ENCODE measurements at regions of chr15 and their contacts with region 1.

Region 1: GRCh38 chr15:85412956-85413854 is 32.8 kb downstream of the AKAP13 start:
- DNase-seq: peak; percentile 57 to 84
- ATAC-seq: peak; percentile 94 to 98 (median 98)
- H3K4me3 ChIP-seq: no peak overlapping the region
- H3K4me3 Mint-ChIP-seq: peak overlapping the region; percentile 22
- H3K27ac ChIP-seq: peak overlapping the region; percentile 73
- H3K27ac Mint-ChIP-seq: peak overlapping the region; percentile 76 to 95
- H3K4me1 ChIP-seq: peaks cover 11% of the 10 kb centered on the region
- H3K4me1 Mint-ChIP-seq: peaks cover 32 to 35% of the 10 kb centered on the region in 2 donors
- H3K27me3 ChIP-seq: no peaks in the 10 kb centered on the region
- H3K27me3 Mint-ChIP-seq: no peaks in the 10 kb centered on the region
- CTCF ChIP-seq: no peak

Region 2: DNA sequence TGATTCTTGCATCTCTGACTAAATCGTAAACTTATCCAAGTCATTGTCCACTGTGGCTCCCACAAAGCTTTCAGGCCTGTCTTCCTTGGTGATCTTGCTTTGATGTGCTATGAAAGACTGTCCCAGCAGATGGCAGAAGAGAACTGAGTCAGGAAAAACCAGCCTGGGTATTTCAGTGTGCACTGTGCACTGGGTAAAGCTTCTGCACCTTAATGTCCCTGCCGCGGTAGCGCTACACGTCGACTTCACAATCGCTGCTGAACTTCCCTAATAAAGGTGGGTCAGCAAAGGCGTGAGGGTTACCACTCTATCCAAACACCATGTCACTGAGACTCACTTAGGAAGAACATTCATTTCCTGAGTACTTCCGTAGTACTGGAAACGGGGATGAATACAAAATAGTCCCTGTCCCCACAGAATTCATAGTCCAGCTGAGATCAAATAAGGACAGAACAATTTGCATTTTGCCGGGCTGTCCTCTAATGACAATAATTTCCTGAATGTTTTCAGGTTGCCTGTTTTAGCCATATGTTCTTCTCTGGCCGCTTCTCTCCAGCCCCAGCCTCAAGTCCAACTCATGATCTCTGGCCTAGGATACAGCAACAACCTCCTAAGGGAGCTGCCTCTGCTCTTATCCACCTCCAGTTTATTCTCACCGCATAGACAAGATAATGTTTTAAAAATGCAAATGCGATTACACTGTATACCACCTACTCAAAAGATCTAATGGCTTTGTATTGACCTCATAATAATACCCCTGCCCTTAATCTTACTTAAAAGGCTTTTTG is 116.4 kb before region 1 on chr15:
- intact Hi-C with region 1: loop called (anchors 1 kb)
- DNase-seq: peak; percentile 33 to 87
- ATAC-seq: peak; percentile 87 to 99 (median 99)
- H3K4me3 ChIP-seq: no peak overlapping the region
- H3K4me3 Mint-ChIP-seq: peak overlapping the region; percentile 6
- H3K27ac ChIP-seq: no peak overlapping the region
- H3K27ac Mint-ChIP-seq: peak overlapping the region in 1 of 2 donors; percentile 49
- H3K4me1 ChIP-seq: peaks cover 3% of the 10 kb centered on the region
- H3K4me1 Mint-ChIP-seq: peaks cover 10 to 15% of the 10 kb centered on the region in 2 donors
- H3K27me3 ChIP-seq: no peaks in the 10 kb centered on the region
- H3K27me3 Mint-ChIP-seq: peaks cover 9% of the 10 kb centered on the region in 2 donors
- CTCF ChIP-seq: peak; percentile 69

Region 3: DNA sequence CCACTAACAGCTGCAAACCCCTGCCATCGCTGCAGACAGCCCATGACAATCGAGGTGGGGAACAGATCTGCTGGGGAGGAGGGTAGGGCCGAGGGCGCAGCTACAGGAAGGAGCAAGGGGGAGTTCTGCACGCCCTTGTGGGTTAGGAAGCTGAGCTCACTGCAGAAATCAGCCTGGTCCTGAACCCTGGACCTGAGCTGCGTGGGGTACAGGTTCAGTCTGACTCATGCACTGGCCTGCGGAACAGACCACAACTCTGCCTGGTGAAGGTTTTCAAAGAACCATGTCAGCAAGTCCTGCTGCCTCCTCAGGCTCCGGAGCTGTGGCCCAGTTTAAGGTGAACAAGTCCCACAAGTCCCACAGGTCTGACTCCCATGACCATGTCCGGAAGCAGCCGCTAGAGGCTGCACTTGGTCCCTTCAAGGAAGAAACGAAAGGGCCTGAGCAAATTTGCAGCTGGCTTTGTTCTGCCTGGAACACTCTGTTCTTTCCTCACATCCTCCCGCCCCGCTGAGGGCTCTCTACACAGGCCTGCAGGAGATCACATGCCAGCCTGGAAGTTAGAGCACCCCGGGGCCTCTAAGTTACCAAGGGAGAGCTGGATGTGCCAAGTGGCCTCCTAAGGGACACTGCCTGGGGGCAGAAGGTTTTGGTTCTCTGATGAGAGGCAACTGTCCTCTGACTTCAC is 82.2 kb before region 1 on chr15:
- intact Hi-C with region 1: loop called (anchors 1 kb)
- DNase-seq: peak; percentile 37 to 83
- ATAC-seq: peak; percentile 70 to 81 (median 79)
- H3K4me3 ChIP-seq: peak overlapping the region; percentile 2
- H3K4me3 Mint-ChIP-seq: peak overlapping the region; percentile 95
- H3K27ac ChIP-seq: peak overlapping the region; percentile 87
- H3K27ac Mint-ChIP-seq: peak overlapping the region; percentile 55 to 91
- H3K4me1 ChIP-seq: peaks cover 29% of the 10 kb centered on the region
- H3K4me1 Mint-ChIP-seq: peaks cover 24 to 27% of the 10 kb centered on the region in 2 donors
- H3K27me3 ChIP-seq: no peaks in the 10 kb centered on the region
- H3K27me3 Mint-ChIP-seq: no peaks in the 10 kb centered on the region
- CTCF ChIP-seq: peak; percentile 49

Region 4: DNA sequence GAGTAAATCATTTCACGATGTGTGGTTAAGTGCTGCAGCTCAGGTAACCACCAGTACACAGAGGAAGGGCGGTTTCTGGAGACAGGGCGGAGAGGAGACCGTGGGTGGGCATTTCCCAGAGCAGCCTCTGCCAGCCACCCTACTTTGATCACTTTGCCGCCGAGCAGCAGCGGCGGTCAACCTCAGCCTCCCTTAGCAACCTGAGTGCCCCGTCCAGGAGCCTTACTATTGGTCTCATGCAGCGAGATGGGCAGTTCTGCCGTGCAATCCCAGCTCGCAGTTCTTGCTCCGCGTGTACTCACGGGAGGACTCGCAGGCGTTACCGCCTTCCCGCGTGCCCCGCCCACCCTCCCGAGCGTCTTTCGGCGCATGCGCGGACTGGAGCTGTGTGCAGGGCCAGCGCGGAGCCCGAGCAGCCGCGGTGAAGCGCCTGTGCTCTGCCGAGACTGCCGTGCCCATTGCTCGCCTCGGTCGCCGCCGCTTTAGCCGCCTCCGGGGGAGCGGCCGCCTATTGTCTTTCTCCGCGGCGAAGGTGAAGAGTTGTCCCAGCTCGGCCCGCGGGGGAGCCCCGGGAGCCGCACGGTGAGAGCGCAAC is 32.9 kb before region 1 on chr15 and contains the start of gene AKAP13:
- intact Hi-C with region 1: loop called (anchors 2 kb)
- DNase-seq: peak; percentile 90 to 98
- ATAC-seq: peak; percentile 79 to 88 (median 80)
- H3K4me3 ChIP-seq: peak within 1 kb of the TSS; percentile 66
- H3K4me3 Mint-ChIP-seq: peak within 1 kb of the TSS; percentile 92
- H3K27ac ChIP-seq: peak within 1 kb of the TSS; percentile 78
- H3K27ac Mint-ChIP-seq: peak within 1 kb of the TSS; percentile 90 to 95
- H3K4me1 ChIP-seq: peaks cover 16% of the 10 kb centered on the region
- H3K4me1 Mint-ChIP-seq: peaks cover 37 to 38% of the 10 kb centered on the region in 2 donors
- H3K27me3 ChIP-seq: no peaks in the 10 kb centered on the region
- H3K27me3 Mint-ChIP-seq: peaks cover 16 to 17% of the 10 kb centered on the region in 2 donors
- CTCF ChIP-seq: no peak
- total RNA-seq, gene AKAP13: 573 to 661 (median 647) TPM

Region 5: DNA sequence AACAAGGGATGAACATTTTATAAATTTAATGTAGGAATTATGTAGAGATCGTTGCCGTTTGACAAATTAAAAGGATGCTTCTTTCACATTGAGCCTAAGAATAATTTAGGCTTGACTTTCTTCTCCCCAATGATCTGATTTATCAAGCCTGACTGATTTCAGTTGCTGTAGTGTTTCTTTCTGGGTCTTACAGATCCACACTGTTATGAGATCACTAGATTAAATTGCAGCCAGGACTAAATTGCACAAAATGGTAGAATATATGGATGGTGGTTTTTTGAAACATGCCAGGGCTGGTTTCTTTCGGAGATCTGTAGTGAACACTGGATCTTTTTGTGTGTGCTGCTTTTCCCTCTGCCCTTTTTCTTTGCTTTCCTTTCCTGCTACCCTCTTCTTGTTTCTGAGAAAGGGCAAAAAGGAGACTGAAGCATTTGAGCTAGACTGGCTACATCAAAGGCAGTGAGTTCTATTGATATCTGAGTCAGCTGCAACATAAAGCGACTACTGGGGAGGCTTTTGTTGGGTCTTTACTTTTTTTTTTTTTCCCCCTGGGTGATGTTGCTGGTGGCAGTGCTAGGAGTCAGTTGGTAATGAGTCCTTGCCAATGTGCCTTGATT is 50.2 kb after region 1 on chr15:
- intact Hi-C with region 1: no loop called
- DNase-seq: no peak
- ATAC-seq: no peak
- H3K4me3 ChIP-seq: no peak overlapping the region
- H3K4me3 Mint-ChIP-seq: no peak overlapping the region
- H3K27ac ChIP-seq: no peak overlapping the region
- H3K27ac Mint-ChIP-seq: no peak overlapping the region
- H3K4me1 ChIP-seq: no peaks in the 10 kb centered on the region
- H3K4me1 Mint-ChIP-seq: peaks cover 34 to 44% of the 10 kb centered on the region in 2 donors
- H3K27me3 ChIP-seq: no peaks in the 10 kb centered on the region
- H3K27me3 Mint-ChIP-seq: no peaks in the 10 kb centered on the region
- CTCF ChIP-seq: no peak

Region 6: GRCh38 chr15:85899927-85900326 is 486.7 kb after region 1 on chr15:
- intact Hi-C with region 1: no loop called
- DNase-seq: no peak
- ATAC-seq: no peak
- H3K4me3 ChIP-seq: no peak overlapping the region
- H3K4me3 Mint-ChIP-seq: no peak overlapping the region
- H3K27ac ChIP-seq: no peak overlapping the region
- H3K27ac Mint-ChIP-seq: no peak overlapping the region
- H3K4me1 ChIP-seq: no peaks in the 10 kb centered on the region
- H3K4me1 Mint-ChIP-seq: peaks cover 14% of the 10 kb centered on the region in 2 donors
- H3K27me3 ChIP-seq: no peaks in the 10 kb centered on the region
- H3K27me3 Mint-ChIP-seq: peaks cover 10 to 19% of the 10 kb centered on the region in 2 donors
- CTCF ChIP-seq: no peak

Measured in natural killer cell (primary cell).